Heart left ventricle (tissue), 16 donors: ENCODE measurements at regions of chr3 and their contacts with region 1.

Region 1: GRCh38 chr3:71247221-71247976 is 336.1 kb downstream of the FOXP1 start:
- DNase-seq: peak in 1 of 5 donors; percentile 47
- ATAC-seq: peak; percentile 32 to 64 (median 54)
- H3K4me3 ChIP-seq: no peak overlapping the region
- H3K27ac ChIP-seq: peak overlapping the region in 6 of 12 donors; percentile 11 to 81 (median 70)
- H3K4me1 ChIP-seq: peaks cover 0 to 62% (median 35%) of the 10 kb centered on the region in 12 donors
- H3K27me3 ChIP-seq: no peaks in the 10 kb centered on the region
- CTCF ChIP-seq: peak in 3 of 12 donors; percentile 9 to 13 (median 12)
- POLR2A ChIP-seq: no peak

Region 2: GRCh38 chr3:71022551-71023335 is 224.7 kb before region 1 on chr3:
- intact Hi-C with region 1: no loop called
- DNase-seq: no peak
- ATAC-seq: peak in 2 of 4 donors; percentile 21 to 22
- H3K4me3 ChIP-seq: no peak overlapping the region
- H3K27ac ChIP-seq: no peak overlapping the region
- H3K4me1 ChIP-seq: peaks cover 0 to 68% (median 29%) of the 10 kb centered on the region in 12 donors
- H3K27me3 ChIP-seq: no peaks in the 10 kb centered on the region
- CTCF ChIP-seq: peak in 7 of 12 donors; percentile 11 to 43 (median 23)
- POLR2A ChIP-seq: no peak

Region 3: DNA sequence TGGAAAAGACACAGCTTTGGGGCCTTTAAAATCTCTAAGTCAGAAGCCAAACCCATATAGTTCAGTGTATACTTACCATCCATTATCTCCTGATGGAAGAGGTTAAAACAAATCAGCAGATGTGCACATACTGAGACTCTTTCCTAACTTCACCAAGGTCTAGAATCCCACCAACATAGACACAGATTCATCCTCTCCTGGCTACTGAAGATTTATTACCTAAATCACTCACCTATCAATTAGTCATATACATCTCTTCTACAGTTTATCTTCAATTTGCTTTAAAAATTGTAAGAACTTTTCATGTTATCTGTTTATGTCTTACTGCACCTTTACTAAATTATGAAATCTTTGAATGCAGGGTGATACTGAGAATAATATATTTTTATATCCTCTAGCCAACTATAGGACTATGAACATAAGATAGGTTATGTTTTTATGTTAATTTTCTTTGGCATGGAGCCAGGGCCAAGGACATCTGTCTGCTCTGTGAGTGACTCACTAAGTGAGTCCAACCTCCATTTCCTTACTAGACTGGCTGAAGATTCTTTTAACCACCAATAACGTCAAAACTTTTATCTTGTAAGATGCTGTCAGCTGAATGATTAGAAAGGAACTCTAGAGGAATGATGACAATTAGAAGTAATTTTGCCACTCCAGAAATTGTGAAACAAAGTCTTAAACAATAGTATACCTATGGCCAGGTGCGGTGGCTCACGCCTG is 61.5 kb before region 1 on chr3:
- intact Hi-C with region 1: loop called in 1 of 10 experiments (anchors 5 kb)
- DNase-seq: no peak
- ATAC-seq: no peak
- H3K4me3 ChIP-seq: no peak overlapping the region
- H3K27ac ChIP-seq: no peak overlapping the region
- H3K4me1 ChIP-seq: peaks cover 0 to 16% (median under 1%) of the 10 kb centered on the region in 12 donors
- H3K27me3 ChIP-seq: no peaks in the 10 kb centered on the region
- CTCF ChIP-seq: no peak
- POLR2A ChIP-seq: no peak

Region 4: GRCh38 chr3:71208211-71209108 is 38.9 kb before region 1 on chr3:
- intact Hi-C with region 1: loop called in 2 of 10 experiments (anchors 5 kb)
- DNase-seq: no peak
- ATAC-seq: peak in 1 of 4 donors; percentile 19
- H3K4me3 ChIP-seq: no peak overlapping the region
- H3K27ac ChIP-seq: peak overlapping the region in 5 of 12 donors; percentile 19 to 87 (median 25)
- H3K4me1 ChIP-seq: peaks cover 0 to 52% (median 35%) of the 10 kb centered on the region in 12 donors
- H3K27me3 ChIP-seq: no peaks in the 10 kb centered on the region
- CTCF ChIP-seq: no peak
- POLR2A ChIP-seq: no peak

Region 5: DNA sequence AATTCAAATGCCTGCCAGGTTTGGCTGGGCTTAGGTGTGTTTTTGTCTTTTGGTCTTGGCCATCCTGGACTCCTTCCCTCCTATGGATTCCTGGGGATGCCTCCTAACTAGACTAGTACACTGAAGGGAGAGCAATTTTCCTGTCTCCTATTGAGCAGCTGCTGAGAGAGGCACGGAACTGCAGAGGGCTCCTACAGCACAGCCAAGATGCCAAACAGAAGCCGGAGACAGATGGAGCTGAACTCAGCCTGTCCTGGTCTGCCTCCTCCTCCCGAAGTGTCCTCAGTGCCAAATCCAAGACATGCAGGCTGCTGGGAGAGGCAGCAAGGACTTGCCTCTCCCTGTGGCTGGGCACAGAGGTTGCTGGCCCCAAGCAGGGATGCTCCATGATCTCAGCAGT is 794.1 kb after region 1 on chr3:
- intact Hi-C with region 1: no loop called
- DNase-seq: no peak
- ATAC-seq: peak in 2 of 4 donors; percentile 34 to 49
- H3K4me3 ChIP-seq: no peak overlapping the region
- H3K27ac ChIP-seq: no peak overlapping the region
- H3K4me1 ChIP-seq: peaks cover 0 to 14% (median 0%) of the 10 kb centered on the region in 12 donors
- H3K27me3 ChIP-seq: peaks cover 0 to 9% (median 0%) of the 10 kb centered on the region in 9 donors
- CTCF ChIP-seq: peak in 1 of 12 donors; percentile 11
- POLR2A ChIP-seq: no peak